GM23248 (cell line): ENCODE measurements at regions of chr14 and their contacts with region 1.

Region 1: DNA sequence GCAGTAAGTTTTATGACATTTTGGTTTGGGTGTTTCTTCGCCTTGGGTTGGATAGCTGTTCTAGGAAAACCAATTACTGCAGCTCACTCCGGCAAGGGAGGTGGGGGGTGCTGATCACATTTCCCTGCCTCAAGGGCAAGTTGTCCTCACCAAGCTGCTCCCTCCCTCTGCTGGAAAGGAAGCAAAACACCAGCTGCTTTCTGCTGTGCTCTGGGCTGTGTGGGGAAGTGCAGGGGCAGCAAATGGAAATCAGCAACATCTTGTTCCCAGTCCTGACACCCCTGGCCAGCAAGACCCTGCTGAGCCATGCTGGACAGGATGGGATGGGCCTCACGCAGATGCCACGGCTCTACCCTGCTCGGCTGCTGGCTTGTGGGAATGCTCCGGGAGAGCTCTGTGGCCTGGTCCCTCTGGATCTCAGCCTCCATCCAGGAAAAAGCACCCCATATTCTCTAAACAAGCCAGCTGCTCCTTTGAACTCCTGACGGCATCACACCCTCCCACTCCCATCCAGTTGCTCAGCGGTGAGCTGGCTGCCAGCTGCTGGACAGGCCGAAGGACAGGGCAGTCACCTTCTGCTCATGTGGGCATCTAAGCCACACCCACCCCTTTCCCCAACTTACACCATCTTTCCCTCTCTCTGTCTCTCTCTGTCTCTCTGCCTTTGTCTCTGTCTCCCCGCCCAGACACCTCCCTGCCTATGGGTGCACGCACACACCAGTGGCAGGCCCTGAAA is 52.4 kb upstream of the EIF5 start:
- DNase-seq: peak; percentile 82
- H3K4me3 ChIP-seq: no peak overlapping the region
- H3K27ac ChIP-seq: no peak overlapping the region
- H3K4me1 ChIP-seq: peaks cover 4% of the 10 kb centered on the region
- H3K27me3 ChIP-seq: peaks cover 22% of the 10 kb centered on the region

Region 2: GRCh38 chr14:103085106-103086091 is 196.3 kb before region 1 on chr14:
- in situ Hi-C with region 1: loop called (anchors 10 kb)
- DNase-seq: peak; percentile 30
- H3K4me3 ChIP-seq: no peak overlapping the region
- H3K27ac ChIP-seq: no peak overlapping the region
- H3K4me1 ChIP-seq: no peaks in the 10 kb centered on the region
- H3K27me3 ChIP-seq: peaks cover 6% of the 10 kb centered on the region; the same call in 1 of the 2 replicates

Region 3: GRCh38 chr14:103333754-103334643 is 52.3 kb after region 1 on chr14 and contains the start of gene EIF5:
- in situ Hi-C with region 1: no loop called
- DNase-seq: peak; percentile 100
- H3K4me3 ChIP-seq: peak within 1 kb of the TSS; percentile 96
- H3K27ac ChIP-seq: peak within 1 kb of the TSS; percentile 98
- H3K4me1 ChIP-seq: peaks cover 25% of the 10 kb centered on the region
- H3K27me3 ChIP-seq: no peaks in the 10 kb centered on the region
- total RNA-seq, gene EIF5: 133 and 156 TPM in 2 replicates